ENCODE measurements at regions of chr13 and their contacts with region 1.

Region 1: DNA sequence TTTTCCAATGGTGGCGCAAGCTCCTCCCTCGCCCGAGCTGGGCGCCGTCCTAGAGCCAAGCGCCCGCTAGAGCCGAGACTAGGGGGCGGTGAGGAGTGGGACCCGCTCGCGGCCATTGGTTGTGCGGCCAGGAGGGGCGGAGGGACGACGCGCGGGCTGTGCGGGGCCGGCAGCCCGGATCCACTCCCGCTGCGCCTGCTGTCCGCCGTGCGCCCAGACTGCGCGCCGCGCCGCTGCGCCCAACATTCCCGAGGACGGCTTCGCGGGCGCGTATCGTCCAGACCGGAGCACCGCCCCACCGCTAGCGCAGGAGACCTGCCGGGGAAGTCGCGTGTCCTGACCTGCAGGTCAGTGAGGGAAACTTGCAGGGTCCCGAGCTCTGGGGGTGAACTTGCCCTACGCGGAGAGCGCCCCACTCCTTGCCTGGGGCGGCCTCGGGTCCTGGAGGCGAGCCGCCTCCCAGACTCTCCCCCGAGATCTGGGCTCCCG is at the start of gene SERTM1:
- DNase-seq: peak; percentile 69
- ATAC-seq: peak; percentile 95
- total RNA-seq, gene SERTM1: 2.0 TPM

Region 2: DNA sequence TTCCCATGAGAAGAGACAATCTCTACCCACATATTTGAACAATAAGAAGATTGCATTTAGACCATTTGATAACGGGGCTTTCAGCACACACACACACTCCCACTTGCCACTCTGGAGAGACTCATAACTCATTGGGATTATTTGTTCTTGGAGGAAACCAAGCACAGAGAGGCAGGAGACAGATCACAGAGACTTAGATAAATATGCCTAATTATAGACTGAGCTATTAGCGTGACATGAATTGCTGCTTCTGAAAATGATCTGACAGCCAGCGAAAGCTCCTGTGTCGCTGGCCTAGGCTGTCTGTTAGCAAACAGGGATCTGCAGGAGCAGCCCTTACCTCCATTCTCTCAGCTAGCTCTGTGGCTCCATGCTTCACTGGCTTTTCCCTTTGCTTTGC is 130.2 kb before region 1 on chr13:
- intact Hi-C with region 1: loop called (anchors 5 kb)
- DNase-seq: no peak
- ATAC-seq: peak; percentile 82

Region 3: GRCh38 chr13:36778083-36778671 is 104.3 kb after region 1 on chr13:
- intact Hi-C with region 1: no loop called
- DNase-seq: no peak
- ATAC-seq: no peak

Measured in Right ventricle myocardium inferior (tissue), 1 donor.